ENCODE measurements at regions of chr22 and their contacts with region 1.

Region 1: DNA sequence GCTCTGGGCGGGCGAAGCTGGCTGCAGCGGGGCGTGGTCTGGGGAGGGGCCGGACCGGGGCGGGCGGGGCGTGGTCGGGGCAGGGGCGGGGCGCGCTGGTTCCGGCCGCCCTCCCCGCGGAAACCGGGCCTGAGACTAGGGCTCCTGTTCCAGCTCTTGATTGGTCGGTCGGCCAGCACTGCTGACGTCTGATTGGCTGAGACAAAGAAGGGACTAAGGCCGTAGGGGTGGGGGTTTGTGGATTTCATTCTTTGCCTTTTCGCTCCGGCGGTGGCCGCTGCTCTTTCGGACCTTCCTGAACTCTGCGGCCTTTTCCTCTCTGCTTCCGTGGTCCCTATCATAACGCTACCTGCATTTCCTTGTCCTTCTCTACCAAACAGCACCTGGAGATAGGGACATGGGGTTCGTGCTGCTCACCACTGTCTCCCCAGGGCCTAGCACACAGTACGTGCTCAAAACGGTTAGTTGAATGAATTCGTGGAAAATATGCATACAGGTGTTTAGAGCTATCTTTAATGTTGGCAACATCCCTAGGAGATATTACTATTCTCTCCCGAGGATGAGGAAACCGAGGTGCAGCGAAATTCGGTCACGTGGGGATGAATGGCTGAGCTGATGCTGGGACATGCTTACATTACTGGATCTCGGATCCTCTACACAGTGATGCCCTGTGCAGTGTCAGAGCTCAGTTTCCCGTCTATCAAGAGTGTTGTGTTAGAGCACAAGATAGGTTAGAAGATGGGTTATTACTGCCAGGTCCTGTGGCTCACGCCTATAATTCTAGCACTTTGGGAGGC is 62.8 kb downstream of the NFAM1 start:
- DNase-seq: peak; percentile 49 to 91 (median 82)
- ATAC-seq: peak; percentile 97
- H3K4me3 ChIP-seq: peak overlapping the region; percentile 60 to 86
- H3K4me3 Mint-ChIP-seq: peak overlapping the region; percentile 85
- H3K27ac ChIP-seq: no peak overlapping the region
- H3K27ac Mint-ChIP-seq: peak overlapping the region; percentile 9
- H3K4me1 ChIP-seq: peaks cover 18% of the 10 kb centered on the region
- H3K4me1 Mint-ChIP-seq: peaks cover 19% of the 10 kb centered on the region
- H3K27me3 ChIP-seq: peaks cover 9 to 24% of the 10 kb centered on the region in 2 experiments
- H3K27me3 Mint-ChIP-seq: peaks cover 23% of the 10 kb centered on the region
- CTCF ChIP-seq: no peak

Region 2: DNA sequence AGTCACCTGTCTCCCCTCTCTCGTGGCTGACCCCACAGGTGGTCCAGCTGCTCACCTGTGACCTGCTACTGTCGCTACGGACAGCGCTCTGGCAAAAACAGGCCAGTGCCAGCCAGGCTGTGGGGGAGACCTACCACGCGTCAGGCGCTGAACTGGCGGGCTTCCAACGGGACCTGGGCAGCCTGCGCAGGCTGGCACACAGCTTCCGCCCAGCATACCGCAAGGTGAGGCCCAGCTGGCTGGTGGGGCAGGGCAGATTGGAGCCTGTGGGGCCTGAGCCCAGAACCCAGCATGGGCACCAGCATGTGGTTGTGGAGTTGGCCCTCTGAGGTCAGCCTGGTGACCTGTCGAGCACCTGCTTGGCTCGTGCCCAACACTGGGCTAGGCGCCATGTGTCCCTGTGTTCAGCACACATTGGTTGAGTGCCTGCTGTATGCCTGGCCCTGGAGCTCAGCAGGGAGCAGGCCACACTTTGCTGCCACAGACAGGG is 466.5 kb before region 1 on chr22:
- CTCF ChIA-PET with region 1: no interaction called
- POLR2A ChIA-PET with region 1: no interaction called
- intact Hi-C with region 1: no loop called
- DNase-seq: no peak
- ATAC-seq: no peak
- H3K4me3 ChIP-seq: no peak overlapping the region
- H3K4me3 Mint-ChIP-seq: no peak overlapping the region
- H3K27ac ChIP-seq: no peak overlapping the region
- H3K27ac Mint-ChIP-seq: no peak overlapping the region
- H3K4me1 ChIP-seq: peaks cover 4% of the 10 kb centered on the region
- H3K4me1 Mint-ChIP-seq: peaks cover 5% of the 10 kb centered on the region
- H3K27me3 ChIP-seq: no peaks in the 10 kb centered on the region
- H3K27me3 Mint-ChIP-seq: no peaks in the 10 kb centered on the region
- CTCF ChIP-seq: no peak

Region 3: DNA sequence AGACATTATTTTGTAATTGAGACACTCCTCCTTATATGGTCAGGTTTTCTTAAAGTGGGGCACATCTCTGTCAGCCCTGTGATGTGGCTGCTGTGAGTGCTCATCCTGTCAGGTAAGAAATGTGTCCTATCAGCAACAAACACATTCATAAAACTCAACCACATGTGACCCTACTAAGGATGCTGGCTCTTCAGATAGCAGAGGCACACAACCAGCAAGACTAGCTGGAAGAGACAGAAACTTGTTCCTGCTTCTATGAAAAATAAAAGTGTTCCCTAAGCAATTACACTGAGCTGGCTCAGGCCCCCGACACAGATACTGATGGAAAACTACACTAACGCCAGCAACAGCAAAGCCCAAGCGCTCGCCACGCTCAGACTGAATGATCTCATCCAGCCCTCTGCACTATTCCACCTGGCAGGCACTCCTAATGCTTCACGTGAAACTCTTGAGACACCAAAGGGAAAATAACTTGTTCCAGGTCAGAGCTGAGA is 189.0 kb before region 1 on chr22:
- CTCF ChIA-PET with region 1: no interaction called
- POLR2A ChIA-PET with region 1: no interaction called
- intact Hi-C with region 1: loop called in 1 of 2 experiments (anchors 5 kb)
- DNase-seq: peak in 8 of 9 experiments; percentile 18 to 82 (median 59)
- ATAC-seq: peak; percentile 96
- H3K4me3 ChIP-seq: no peak overlapping the region
- H3K4me3 Mint-ChIP-seq: peak overlapping the region; percentile 51
- H3K27ac ChIP-seq: peak overlapping the region in 1 of 2 experiments; percentile 61
- H3K27ac Mint-ChIP-seq: peak overlapping the region; percentile 88
- H3K4me1 ChIP-seq: peaks cover 26% of the 10 kb centered on the region
- H3K4me1 Mint-ChIP-seq: peaks cover 56% of the 10 kb centered on the region
- H3K27me3 ChIP-seq: no peaks in the 10 kb centered on the region
- H3K27me3 Mint-ChIP-seq: no peaks in the 10 kb centered on the region
- CTCF ChIP-seq: no peak

Measured in CD8-positive, alpha-beta T cell (primary cell).